ENCODE measurements at regions of chr11 and their contacts with region 1.

Region 1: DNA sequence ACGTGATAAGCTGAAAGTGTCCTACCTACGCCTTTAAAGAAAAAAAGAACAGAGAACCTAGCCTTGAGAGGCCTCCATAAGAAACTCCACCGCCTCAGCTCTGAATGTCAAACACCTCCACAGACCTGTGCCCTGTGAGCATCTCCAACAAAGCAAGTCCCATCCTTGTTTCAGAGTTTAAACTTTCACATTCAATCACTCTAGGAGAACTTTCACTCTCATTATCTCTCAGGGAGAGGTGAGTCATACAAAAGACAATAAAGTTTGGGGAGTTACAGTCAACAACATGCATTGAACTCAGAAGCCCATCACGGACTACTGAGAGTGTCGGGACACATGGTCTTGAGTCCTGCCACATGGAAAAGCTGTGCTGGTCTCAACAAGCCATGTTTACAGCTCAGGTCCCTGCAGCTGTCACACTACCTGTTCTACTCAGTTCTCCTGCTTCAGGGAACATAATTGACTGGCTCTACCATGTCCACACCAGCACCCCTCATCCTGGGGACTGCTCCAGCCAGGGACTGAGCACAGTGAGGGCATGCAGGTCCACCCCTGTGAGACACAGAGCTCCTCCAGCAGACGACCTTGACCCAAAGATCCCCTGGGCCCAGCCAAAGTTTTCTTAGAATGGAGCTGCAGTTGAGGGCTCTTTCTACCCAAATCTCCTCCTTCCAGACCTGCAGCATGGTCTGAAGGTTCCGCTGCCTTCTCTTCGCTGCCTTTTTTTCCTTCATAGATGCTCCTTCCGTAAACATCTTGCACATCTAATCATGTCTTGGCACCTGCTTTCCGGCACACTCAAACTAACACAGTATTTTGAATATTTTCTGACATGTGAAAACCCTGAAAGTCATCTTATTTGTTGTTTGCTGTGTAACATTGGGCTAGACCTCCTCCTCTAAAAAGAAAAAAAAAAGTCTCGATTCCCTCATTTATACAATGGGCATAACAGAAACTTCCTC is 114.9 kb downstream of the ETS1 start:
- DNase-seq: peak; percentile 83
- H3K4me3 Mint-ChIP-seq: peak overlapping the region; percentile 64
- H3K27ac Mint-ChIP-seq: peak overlapping the region; percentile 99
- H3K4me1 Mint-ChIP-seq: peaks cover 97% of the 10 kb centered on the region
- H3K27me3 Mint-ChIP-seq: no peaks in the 10 kb centered on the region

Region 2: DNA sequence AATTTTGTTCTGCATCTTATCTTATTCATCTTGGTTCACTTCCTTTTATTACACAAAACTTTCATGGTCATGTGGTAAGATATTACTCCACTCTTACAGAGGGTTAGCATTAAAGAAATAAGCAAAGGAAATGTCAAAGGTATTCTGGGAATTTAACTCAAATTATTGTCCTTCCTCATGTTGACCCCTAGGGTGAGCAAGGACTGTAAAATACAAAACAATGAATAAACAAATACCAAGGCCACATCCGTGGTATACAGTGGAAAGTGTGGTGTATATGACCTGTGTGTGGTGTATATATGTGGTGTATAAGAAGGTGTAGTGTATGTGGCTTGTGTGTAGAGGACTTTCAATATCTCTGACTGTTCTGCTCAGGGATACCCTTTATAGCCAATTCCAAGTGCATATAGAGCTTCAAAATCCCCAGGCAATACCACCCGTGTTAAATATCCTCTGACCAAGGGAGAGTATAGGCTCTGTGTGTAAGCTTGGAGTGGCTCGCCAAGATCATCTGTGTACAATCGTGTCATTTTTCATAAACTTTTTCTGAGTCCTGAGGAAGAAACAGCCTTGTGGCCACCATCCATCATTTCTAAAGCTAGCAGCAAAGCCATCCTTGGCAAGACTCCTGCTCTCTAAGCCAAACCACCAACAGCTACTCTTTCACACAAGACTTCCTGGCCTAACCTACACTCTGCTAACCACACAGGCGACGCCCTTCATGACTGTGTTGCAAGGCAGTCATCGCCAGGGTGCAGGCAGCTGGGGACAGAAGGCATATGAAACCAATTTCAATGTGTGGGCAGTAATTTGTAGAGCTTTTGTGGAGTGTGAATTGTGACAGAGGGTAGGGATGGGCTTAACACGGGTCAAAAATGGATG is 433.0 kb before region 1 on chr11:
- CTCF ChIA-PET with region 1: no interaction called
- POLR2A ChIA-PET with region 1: no interaction called
- intact Hi-C with region 1: loop called (anchors 10 kb)
- DNase-seq: peak; percentile 90
- H3K4me3 Mint-ChIP-seq: peak overlapping the region; percentile 61
- H3K27ac Mint-ChIP-seq: peak overlapping the region; percentile 89
- H3K4me1 Mint-ChIP-seq: peaks cover 52% of the 10 kb centered on the region
- H3K27me3 Mint-ChIP-seq: no peaks in the 10 kb centered on the region

Region 3: GRCh38 chr11:128302425-128303186 is 169.8 kb before region 1 on chr11:
- CTCF ChIA-PET with region 1: no interaction called
- POLR2A ChIA-PET with region 1: interaction called, 7 read pairs
- intact Hi-C with region 1: loop called (anchors 1 kb)
- DNase-seq: peak; percentile 81
- H3K4me3 Mint-ChIP-seq: peak overlapping the region; percentile 79
- H3K27ac Mint-ChIP-seq: peak overlapping the region; percentile 94
- H3K4me1 Mint-ChIP-seq: peaks cover 78% of the 10 kb centered on the region
- H3K27me3 Mint-ChIP-seq: no peaks in the 10 kb centered on the region

Region 4: DNA sequence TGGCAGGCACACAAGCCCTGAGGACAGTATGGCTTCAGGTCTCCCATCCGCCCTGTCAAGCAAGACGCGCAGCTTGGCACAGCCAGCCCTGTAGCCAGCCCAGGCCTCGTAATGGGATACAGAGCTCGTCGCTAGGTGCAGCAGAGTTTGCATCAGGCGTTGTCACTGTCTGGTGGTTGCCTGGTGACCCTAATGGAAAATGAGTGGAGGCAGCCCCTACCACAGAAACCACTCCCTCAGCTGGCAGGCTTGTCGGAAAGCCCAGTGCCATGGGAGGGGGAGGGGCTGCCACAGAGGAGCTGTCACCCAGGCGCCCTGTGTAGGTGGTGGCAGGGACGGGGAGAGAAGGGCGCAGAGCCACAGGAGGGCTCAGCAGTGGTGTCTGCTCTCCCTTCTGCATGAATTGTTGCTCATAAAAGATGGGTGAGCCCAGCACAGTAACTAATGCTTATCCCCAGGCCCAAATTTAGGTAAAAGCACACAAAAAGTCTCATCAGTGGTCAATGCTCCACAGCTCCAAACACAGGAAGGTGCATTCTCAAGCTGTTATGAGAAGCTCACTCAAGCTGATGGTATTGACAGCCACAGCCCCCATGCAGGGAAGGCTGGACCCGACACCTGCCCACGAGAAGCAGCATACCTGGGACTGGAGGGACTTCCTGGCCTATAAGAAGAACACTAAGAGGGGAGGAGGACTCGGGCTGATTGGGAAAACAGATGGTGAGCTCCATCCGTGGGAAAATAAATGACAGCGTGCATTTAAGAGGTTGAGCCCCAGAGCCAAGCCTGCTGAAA is 49.6 kb before region 1 on chr11:
- CTCF ChIA-PET with region 1: interaction called, 3 read pairs
- POLR2A ChIA-PET with region 1: interaction called, 7 read pairs
- intact Hi-C with region 1: loop called (anchors 1 kb)
- DNase-seq: peak; percentile 95
- H3K4me3 Mint-ChIP-seq: peak overlapping the region; percentile 49
- H3K27ac Mint-ChIP-seq: peak overlapping the region; percentile 65
- H3K4me1 Mint-ChIP-seq: peaks cover 34% of the 10 kb centered on the region
- H3K27me3 Mint-ChIP-seq: no peaks in the 10 kb centered on the region

Region 5: GRCh38 chr11:128506999-128507611 is 34.7 kb after region 1 on chr11:
- CTCF ChIA-PET with region 1: interaction called, 9 read pairs
- POLR2A ChIA-PET with region 1: interaction called, 85 read pairs
- intact Hi-C with region 1: no loop called
- DNase-seq: peak; percentile 74
- H3K4me3 Mint-ChIP-seq: peak overlapping the region; percentile 77
- H3K27ac Mint-ChIP-seq: peak overlapping the region; percentile 96
- H3K4me1 Mint-ChIP-seq: peaks cover 90% of the 10 kb centered on the region
- H3K27me3 Mint-ChIP-seq: no peaks in the 10 kb centered on the region

Region 6: GRCh38 chr11:128579798-128580504 is 107.5 kb after region 1 on chr11:
- CTCF ChIA-PET with region 1: no interaction called
- POLR2A ChIA-PET with region 1: interaction called, 8 read pairs
- intact Hi-C with region 1: loop called (anchors 1 kb)
- DNase-seq: peak; percentile 27
- H3K4me3 Mint-ChIP-seq: peak overlapping the region; percentile 71
- H3K27ac Mint-ChIP-seq: peak overlapping the region; percentile 95
- H3K4me1 Mint-ChIP-seq: peaks cover 68% of the 10 kb centered on the region
- H3K27me3 Mint-ChIP-seq: no peaks in the 10 kb centered on the region